ENCODE measurements at regions of chr16 and their contacts with region 1.

Region 1: DNA sequence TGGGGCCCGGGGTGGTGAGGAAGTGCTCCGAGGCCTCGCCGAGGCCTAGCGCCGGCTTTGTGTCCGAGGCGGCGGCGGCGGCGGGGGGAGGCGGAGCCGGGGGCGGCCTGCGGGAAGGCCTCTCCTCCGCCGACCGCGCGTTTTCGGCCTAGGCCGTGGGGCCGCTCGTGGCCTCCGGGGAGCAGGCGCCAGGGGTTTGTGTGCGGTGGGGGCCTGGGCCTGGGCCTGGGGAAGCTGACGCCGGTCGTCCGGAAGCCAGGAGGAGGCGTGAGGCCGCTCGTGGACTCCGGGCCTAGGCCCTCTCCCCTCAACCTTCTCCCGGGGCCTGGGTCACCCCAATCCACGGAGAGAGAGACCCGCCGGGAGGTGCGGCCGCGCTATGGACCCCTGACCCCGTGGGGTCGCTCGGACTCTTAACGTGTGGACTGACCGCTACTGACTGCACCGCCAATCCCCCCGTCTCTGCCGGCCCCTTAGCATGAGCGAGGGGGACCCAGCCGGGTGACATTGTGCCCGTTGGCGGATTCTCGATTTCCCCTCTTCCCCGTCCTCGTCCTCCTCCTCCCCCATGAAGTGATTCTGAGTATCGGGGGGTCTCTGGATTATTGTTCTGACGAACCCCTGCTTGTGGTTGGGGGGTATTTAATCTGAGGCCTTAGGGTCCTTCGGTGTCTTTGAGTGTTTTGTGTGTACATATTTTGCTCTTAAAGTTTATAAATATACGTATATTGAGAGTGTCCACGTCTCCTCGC is 660 bp downstream of the RBBP6 start:
- DNase-seq: peak; percentile 64
- H3K4me3 Mint-ChIP-seq: peak overlapping the region; percentile 88
- H3K27ac Mint-ChIP-seq: peak overlapping the region; percentile 90
- H3K4me1 Mint-ChIP-seq: peaks cover 27% of the 10 kb centered on the region
- H3K27me3 Mint-ChIP-seq: no peaks in the 10 kb centered on the region
- CTCF ChIP-seq: no peak

Region 2: DNA sequence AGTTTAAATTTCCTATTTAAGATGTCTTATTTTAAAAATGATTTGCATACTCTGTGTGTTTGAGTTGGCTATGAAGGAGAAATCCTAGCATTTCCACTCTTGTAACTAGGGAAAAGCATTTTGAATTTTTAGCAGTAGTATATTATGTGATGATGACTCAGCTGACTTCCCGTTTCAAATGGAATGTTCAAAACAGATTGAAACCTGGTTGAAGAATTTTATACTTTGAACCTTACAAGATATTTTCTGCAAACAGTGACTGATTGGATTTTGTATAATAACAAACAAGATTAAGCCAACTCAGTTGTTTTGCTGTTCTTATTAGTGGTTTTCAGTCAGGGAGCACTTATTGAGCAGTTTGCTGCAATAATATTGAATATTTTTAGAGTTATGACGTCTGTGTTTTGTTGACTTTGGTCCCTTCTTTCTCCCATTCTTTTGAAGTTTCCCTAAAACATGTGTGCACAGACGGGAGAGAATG is 197.4 kb after region 1 on chr16:
- CTCF ChIA-PET with region 1: no interaction called
- intact Hi-C with region 1: loop called (anchors 5 kb)
- DNase-seq: no peak
- H3K4me3 Mint-ChIP-seq: no peak overlapping the region
- H3K27ac Mint-ChIP-seq: peak overlapping the region; percentile 11
- H3K4me1 Mint-ChIP-seq: peaks cover 40% of the 10 kb centered on the region
- H3K27me3 Mint-ChIP-seq: no peaks in the 10 kb centered on the region
- CTCF ChIP-seq: no peak

Region 3: GRCh38 chr16:24918641-24919040 is 378.6 kb after region 1 on chr16:
- CTCF ChIA-PET with region 1: no interaction called
- intact Hi-C with region 1: no loop called
- DNase-seq: no peak
- H3K4me3 Mint-ChIP-seq: no peak overlapping the region
- H3K27ac Mint-ChIP-seq: no peak overlapping the region
- H3K4me1 Mint-ChIP-seq: no peaks in the 10 kb centered on the region
- H3K27me3 Mint-ChIP-seq: no peaks in the 10 kb centered on the region
- CTCF ChIP-seq: no peak

Measured in Calu3 (cell line).